Activated CD8-positive, alpha-beta T cell treated with anti-CD3 and anti-CD28 coated beads, Interleukin-2, amount 10 ng/mL, durations not matched to agents 7 days and 5 days (primary cell): ENCODE measurements at regions of chr17 and their contacts with region 1.

Region 1: DNA sequence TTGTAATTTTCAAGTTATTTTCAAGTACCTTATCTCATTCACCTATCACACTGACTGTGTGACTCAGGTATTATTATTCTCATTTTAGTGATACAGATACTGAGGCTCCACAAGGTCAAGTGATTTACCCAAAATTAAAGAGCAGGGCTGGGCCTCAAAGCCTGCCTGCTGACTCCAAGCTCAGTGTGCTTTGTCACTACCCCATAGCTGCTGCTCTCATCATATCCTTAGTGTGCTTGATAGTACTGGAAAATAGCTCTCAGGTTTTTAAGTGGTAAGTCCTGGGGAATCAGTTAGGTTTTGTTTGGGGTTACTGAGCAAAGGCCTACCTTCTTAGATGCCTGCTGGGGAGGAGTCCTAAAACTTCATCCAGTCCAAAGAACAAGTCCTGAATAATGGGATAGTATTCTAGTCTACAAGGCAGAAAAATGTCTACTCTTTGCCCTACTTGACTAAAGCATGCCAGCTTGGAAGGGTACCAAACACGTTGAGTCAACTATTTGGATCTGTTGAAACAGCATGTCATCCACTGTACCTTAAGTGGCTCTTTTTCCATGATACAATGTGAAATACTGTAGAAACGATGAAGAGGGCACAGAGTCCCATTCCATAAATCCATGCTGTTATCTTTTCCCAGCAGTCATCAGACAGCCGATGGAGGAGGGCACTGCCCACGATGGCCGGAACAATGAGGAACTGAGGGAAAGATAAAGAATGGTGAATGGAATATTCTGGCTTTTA is 10.7 kb downstream of the MMD start:
- DNase-seq: no peak
- ATAC-seq: no peak
- H3K4me3 Mint-ChIP-seq: no peak overlapping the region
- H3K27ac Mint-ChIP-seq: no peak overlapping the region
- H3K4me1 Mint-ChIP-seq: peaks cover 37% of the 10 kb centered on the region
- H3K27me3 Mint-ChIP-seq: no peaks in the 10 kb centered on the region

Region 2: DNA sequence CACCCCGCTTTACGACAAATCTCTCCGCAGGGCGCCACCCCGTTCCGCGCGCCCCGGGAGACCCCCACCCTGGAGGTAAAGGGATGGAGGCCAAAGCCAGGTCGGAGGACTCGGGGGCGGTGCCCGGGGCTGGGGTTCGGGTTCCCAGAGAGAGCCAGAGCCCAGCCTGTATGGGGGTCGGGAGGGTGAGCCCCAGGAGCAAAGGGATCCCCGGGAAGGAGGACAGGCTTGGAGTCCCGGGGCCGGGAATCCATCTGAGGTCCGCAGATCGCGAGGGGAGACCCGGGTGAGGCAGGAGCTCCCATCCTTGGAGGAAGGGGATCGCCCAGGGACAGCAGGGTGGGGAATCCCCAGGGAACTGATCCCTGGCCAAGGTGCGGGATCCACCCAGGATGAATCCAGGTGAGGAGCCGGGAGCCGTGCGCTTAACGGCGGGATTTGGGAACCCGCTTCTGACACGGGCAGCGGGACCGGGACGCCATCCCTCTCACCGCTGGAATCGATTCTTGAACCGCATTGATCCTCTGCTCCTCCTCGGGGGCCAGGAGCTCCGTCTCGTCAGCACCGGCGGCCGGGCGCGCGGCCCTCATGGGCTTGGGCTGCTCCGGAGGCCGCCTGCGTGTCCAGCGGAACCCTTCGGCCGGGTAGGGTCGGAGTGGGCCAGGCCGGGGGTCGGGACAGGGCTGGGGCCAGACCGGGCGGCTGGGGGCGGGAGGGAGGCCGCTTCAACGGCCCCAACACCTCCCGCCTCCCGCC is 10.5 kb after region 1 on chr17 and contains the start of gene MMD:
- CTCF ChIA-PET with region 1: interaction called, 5 read pairs
- POLR2A ChIA-PET with region 1: interaction called, 10 read pairs
- DNase-seq: no peak
- ATAC-seq: peak; percentile 9
- H3K4me3 Mint-ChIP-seq: peak within 1 kb of the TSS; percentile 94
- H3K27ac Mint-ChIP-seq: peak within 1 kb of the TSS; percentile 99
- H3K4me1 Mint-ChIP-seq: peaks cover 46% of the 10 kb centered on the region
- H3K27me3 Mint-ChIP-seq: peaks cover 21% of the 10 kb centered on the region
- total RNA-seq, gene MMD: 39.4 to 41.3 TPM

Region 3: DNA sequence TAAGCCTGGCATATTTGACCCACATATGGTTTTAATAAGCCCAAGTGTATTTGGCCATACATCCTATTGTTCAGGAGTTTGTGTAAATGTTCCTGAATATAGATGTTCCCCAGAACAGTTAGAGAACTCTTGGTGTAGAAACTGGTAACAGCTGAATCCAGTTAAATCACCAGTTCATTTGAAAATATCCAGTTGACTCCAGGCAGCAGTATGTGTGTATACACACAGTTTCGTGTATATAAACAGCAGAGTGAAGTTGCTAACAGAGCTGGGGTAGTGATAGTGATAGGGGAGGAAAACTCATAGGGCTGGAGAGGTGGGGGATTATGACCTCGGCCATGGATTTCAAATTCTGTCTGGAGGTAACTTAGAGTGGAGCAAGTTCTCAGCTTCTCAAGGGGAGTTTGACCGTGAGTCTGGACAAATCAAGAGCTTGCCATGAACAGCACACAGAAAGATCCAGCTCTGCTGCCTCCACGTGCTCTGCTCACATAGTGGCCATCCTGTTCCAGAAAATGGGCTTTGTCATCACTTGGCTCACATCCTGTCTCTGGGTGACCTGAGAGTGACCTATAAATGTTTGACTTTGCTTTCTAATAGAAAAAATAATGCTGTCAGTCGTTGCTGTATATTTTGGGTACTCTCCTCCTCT is 41.4 kb after region 1 on chr17:
- CTCF ChIA-PET with region 1: no interaction called
- POLR2A ChIA-PET with region 1: no interaction called
- DNase-seq: no peak
- ATAC-seq: no peak
- H3K4me3 Mint-ChIP-seq: no peak overlapping the region
- H3K27ac Mint-ChIP-seq: peak overlapping the region; percentile 16
- H3K4me1 Mint-ChIP-seq: peaks cover 21% of the 10 kb centered on the region
- H3K27me3 Mint-ChIP-seq: peaks cover 16% of the 10 kb centered on the region

Region 4: GRCh38 chr17:55533608-55534007 is 122.7 kb after region 1 on chr17:
- CTCF ChIA-PET with region 1: no interaction called
- POLR2A ChIA-PET with region 1: no interaction called
- DNase-seq: no peak
- ATAC-seq: no peak
- H3K4me3 Mint-ChIP-seq: no peak overlapping the region
- H3K27ac Mint-ChIP-seq: no peak overlapping the region
- H3K4me1 Mint-ChIP-seq: no peaks in the 10 kb centered on the region
- H3K27me3 Mint-ChIP-seq: peaks cover 6% of the 10 kb centered on the region